Mammary epithelial cell (primary cell): ENCODE measurements at regions of chr5 and their contacts with region 1.

Region 1: DNA sequence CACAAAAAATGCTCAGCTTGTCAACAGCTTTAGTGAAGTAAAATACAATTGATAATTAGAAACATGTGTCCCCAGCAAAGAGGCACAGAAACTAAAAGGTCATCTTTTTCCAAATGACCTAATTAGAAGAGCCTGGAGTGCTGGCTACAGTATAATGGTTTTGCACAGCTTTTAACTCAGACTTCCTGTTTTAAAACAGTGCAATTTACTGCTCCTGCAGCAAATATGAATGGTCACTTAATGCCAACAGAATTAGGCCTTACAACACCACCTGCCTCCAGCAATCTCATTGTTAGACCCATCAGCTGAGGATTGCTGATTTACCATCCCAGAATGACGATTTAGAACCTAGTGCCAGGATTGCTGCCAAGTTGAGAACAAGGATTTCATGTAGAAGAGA is 239.3 kb downstream of the CETN3 start:
- DNase-seq: no peak
- H3K4me3 ChIP-seq: no peak overlapping the region
- H3K27ac ChIP-seq: no peak overlapping the region
- H3K4me1 ChIP-seq: no peaks in the 10 kb centered on the region
- H3K27me3 ChIP-seq: peaks cover 5% of the 10 kb centered on the region
- CTCF ChIP-seq: no peak

Region 2: GRCh38 chr5:89936576-89936975 is 233.7 kb before region 1 on chr5:
- CTCF ChIA-PET with region 1: no interaction called
- dilution Hi-C with region 1: no loop called
- in situ Hi-C with region 1: no loop called
- intact Hi-C with region 1: no loop called
- DNase-seq: peak; percentile 12
- H3K4me3 ChIP-seq: no peak overlapping the region
- H3K27ac ChIP-seq: no peak overlapping the region
- H3K4me1 ChIP-seq: no peaks in the 10 kb centered on the region
- H3K27me3 ChIP-seq: no peaks in the 10 kb centered on the region
- CTCF ChIP-seq: no peak

Region 3: DNA sequence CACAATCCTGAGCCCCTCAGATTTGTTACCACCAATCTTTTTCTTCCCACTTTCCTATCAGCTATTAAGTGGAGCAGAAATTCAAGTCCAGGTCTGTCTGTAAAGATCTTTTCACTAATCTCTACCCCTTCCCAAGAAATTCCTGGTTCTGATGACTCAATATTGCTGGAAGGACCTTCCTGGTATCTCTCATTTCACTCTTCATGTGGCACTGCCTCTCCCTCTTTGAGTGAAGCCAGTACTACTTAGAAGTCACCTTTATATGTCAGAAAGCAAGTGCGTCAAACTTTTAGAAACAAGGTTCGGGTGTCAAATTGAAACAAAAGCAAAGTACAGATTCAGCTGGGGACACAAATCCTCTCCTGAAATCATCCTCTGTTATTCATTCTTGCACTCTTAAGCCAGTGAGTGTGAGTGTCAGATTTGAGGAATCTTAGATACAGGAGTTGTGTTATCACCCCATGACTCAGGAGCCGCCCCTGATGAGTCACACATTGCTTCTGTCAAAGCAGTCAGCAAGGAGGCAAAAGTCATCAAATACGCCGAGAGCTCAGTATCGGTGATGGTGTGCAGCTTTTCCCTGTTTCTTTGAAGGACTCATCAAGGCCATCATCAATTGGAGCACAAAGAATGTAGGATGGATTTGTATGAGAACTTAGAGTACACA is 73.7 kb before region 1 on chr5:
- CTCF ChIA-PET with region 1: no interaction called
- dilution Hi-C with region 1: no loop called
- in situ Hi-C with region 1: no loop called
- intact Hi-C with region 1: no loop called
- DNase-seq: peak; percentile 76
- H3K4me3 ChIP-seq: no peak overlapping the region
- H3K27ac ChIP-seq: no peak overlapping the region
- H3K4me1 ChIP-seq: peaks cover 24% of the 10 kb centered on the region
- H3K27me3 ChIP-seq: no peaks in the 10 kb centered on the region
- CTCF ChIP-seq: no peak

Region 4: GRCh38 chr5:90135779-90136378 is 34.4 kb before region 1 on chr5:
- CTCF ChIA-PET with region 1: no interaction called
- dilution Hi-C with region 1: loop called (anchors 5 kb)
- in situ Hi-C with region 1: no loop called
- intact Hi-C with region 1: no loop called
- DNase-seq: no peak
- H3K4me3 ChIP-seq: no peak overlapping the region
- H3K27ac ChIP-seq: no peak overlapping the region
- H3K4me1 ChIP-seq: no peaks in the 10 kb centered on the region
- H3K27me3 ChIP-seq: peaks cover 3% of the 10 kb centered on the region
- CTCF ChIP-seq: peak; percentile 7 to 21

Region 5: DNA sequence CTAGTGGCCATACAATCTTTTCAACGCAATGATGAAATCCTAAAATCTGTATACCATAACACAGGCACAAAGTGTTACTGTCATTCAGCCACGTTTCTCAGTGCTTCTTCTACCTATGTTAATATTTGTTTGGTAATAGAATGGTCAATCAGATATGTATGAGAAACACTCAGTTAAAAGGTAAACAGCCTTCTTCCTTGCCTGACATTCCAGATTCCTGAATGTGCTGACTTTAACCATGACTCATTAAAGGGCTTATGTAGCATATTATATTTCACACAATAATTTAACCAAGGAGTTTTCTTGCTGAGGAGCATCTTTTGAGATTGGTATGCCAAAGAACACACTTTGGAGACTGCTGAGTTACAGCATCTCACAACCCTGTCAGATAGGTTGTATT is 51.7 kb after region 1 on chr5:
- CTCF ChIA-PET with region 1: no interaction called
- dilution Hi-C with region 1: loop called (anchors 5 kb)
- in situ Hi-C with region 1: no loop called
- intact Hi-C with region 1: no loop called
- DNase-seq: peak; percentile 29
- H3K4me3 ChIP-seq: no peak overlapping the region
- H3K27ac ChIP-seq: no peak overlapping the region
- H3K4me1 ChIP-seq: no peaks in the 10 kb centered on the region
- H3K27me3 ChIP-seq: peaks cover 2% of the 10 kb centered on the region
- CTCF ChIP-seq: no peak